Vagina (tissue), 2 donors: ENCODE measurements at regions of chr2 and their contacts with region 1.

Region 1: DNA sequence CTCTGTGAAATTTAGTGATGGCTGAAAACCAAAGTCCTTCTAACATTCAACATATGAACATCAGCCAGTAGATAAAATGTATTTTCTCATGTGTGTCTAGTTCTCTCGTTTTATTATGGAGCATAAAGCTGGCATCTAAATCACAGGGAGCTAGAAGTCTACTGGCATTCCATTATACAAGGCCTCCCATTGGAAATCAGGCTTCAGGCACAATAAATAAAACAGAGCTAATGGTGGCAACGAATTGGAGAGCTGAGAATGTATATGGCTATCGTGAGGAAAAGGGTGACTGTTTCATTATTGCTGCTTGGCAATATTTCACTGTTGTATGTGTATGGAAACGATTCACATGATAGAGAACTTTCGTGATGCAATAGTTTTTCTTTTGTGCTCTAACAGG is 62.4 kb downstream of the SLC5A7 start:
- DNase-seq: no peak
- H3K4me3 ChIP-seq: no peak overlapping the region
- H3K27ac ChIP-seq: no peak overlapping the region
- H3K4me1 ChIP-seq: no peaks in the 10 kb centered on the region
- H3K27me3 ChIP-seq: no peaks in the 10 kb centered on the region
- CTCF ChIP-seq: no peak
- POLR2A ChIP-seq: no peak

Region 2: GRCh38 chr2:107663632-107664031 is 385.1 kb before region 1 on chr2:
- intact Hi-C with region 1: no loop called
- DNase-seq: no peak
- H3K4me3 ChIP-seq: no peak overlapping the region
- H3K27ac ChIP-seq: no peak overlapping the region
- H3K4me1 ChIP-seq: no peaks in the 10 kb centered on the region
- H3K27me3 ChIP-seq: no peaks in the 10 kb centered on the region
- CTCF ChIP-seq: no peak
- POLR2A ChIP-seq: no peak

Region 3: GRCh38 chr2:107751936-107752335 is 296.8 kb before region 1 on chr2:
- intact Hi-C with region 1: no loop called
- DNase-seq: no peak
- H3K4me3 ChIP-seq: no peak overlapping the region
- H3K27ac ChIP-seq: no peak overlapping the region
- H3K4me1 ChIP-seq: no peaks in the 10 kb centered on the region
- H3K27me3 ChIP-seq: no peaks in the 10 kb centered on the region
- CTCF ChIP-seq: no peak
- POLR2A ChIP-seq: no peak

Region 4: GRCh38 chr2:109500910-109501309 is 1452.2 kb after region 1 on chr2:
- intact Hi-C with region 1: loop called (anchors 5 kb)
- DNase-seq: no peak
- H3K4me3 ChIP-seq: no peak overlapping the region
- H3K27ac ChIP-seq: no peak overlapping the region
- H3K4me1 ChIP-seq: peaks cover 9% of the 10 kb centered on the region
- H3K27me3 ChIP-seq: no peaks in the 10 kb centered on the region
- CTCF ChIP-seq: no peak
- POLR2A ChIP-seq: no peak